A549 (cell line): ENCODE measurements at regions of chr4 and their contacts with region 1.

Region 1: DNA sequence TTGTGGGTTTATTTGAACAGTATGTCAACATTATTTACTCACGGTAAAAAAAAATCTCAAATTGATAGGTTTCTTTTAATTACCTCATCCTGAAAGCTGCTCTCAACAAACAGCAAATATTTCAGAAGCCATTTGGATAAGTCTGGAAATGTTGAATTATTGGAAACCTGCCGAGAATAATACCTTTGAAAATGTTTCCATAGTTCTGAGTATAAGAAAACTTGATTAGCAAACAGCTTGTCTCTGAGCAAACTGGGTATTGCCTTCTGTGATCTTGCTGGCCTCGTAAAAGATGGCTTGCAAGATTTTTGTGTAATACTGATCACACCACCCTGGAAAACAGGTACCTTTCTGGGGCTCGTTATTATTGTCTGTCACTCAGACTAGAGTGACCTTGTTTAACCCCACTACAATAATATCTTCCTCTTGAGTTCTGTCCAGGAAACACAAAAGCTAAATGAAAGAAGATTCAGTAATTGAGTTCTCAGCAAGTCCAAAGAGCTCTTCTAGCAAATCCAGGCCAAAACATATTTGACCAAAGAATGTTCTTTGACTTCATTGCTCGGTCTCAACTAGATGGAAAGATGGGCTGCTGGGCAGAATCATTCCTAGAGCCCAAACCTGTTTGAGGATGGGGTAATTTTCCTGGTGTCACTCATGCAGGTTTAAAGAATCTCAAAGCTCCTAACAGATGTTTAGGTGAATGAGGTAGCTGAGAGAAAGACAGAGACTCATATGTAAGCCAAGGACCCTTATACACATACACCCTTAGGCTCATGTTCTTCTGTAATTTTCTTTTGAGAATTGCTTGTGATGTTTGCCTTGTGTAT is 255.6 kb upstream of the JADE1 start:
- DNase-seq: peak in 1 of 2 experiments; percentile 74
- ATAC-seq: peak; percentile 34 to 44; a peak in 5 of 6 replicates
- H3K4me3 ChIP-seq: peak overlapping the region; percentile 28; the same call in 2 of the 3 replicates
- H3K27ac ChIP-seq: peak overlapping the region; percentile 99 to 100
- H3K4me1 ChIP-seq: peaks cover 53% of the 10 kb centered on the region
- CTCF ChIP-seq: no peak
- EP300 ChIP-seq: peak in 1 of 2 experiments; percentile 79; a peak in 2 of 5 replicates
- POLR2A ChIP-seq: no peak
- RAD21 ChIP-seq: no peak; a peak in 2 of 5 replicates

Region 2: DNA sequence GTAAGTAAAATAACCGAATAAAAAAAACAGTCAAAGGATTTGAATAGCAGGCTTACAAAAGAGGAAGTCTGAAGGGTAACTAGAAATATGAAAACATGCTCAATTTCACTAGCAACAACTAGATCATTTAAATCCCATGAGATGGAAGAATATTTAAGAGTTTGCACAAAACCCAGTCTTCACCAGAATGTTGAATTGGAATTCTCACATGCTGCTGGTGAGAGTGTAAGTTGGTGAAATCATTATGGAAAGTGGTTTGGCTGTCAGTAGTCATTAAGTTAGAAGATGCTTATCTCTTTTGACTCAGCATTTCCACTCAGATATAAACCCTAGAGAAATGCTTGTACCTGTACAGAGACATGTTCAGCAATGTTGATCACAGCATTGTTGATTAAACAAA is 376.4 kb before region 1 on chr4:
- CTCF ChIA-PET with region 1: no interaction called
- POLR2A ChIA-PET with region 1: no interaction called
- DNase-seq: no peak
- ATAC-seq: no peak
- H3K4me3 ChIP-seq: no peak overlapping the region
- H3K27ac ChIP-seq: no peak overlapping the region
- H3K4me1 ChIP-seq: no peaks in the 10 kb centered on the region
- CTCF ChIP-seq: no peak
- EP300 ChIP-seq: no peak
- POLR2A ChIP-seq: no peak
- RAD21 ChIP-seq: no peak

Region 3: GRCh38 chr4:128517739-128518510 is 36.0 kb before region 1 on chr4:
- CTCF ChIA-PET with region 1: interaction called, 10 read pairs
- POLR2A ChIA-PET with region 1: interaction called, 18 read pairs
- DNase-seq: peak; percentile 81 to 93
- ATAC-seq: peak; percentile 97
- H3K4me3 ChIP-seq: no peak overlapping the region
- H3K27ac ChIP-seq: peak overlapping the region; percentile 95 to 99
- H3K4me1 ChIP-seq: peaks cover 66% of the 10 kb centered on the region
- CTCF ChIP-seq: no peak
- EP300 ChIP-seq: peak; percentile 79 to 81; a peak in 4 of 5 replicates
- POLR2A ChIP-seq: no peak
- RAD21 ChIP-seq: peak; percentile 9 to 42; a peak in 2 of 5 replicates

Region 4: GRCh38 chr4:128528793-128529553 is 24.9 kb before region 1 on chr4:
- CTCF ChIA-PET with region 1: no interaction called
- POLR2A ChIA-PET with region 1: interaction called, 28 read pairs
- DNase-seq: peak; percentile 78 to 95
- ATAC-seq: peak; percentile 97 to 99
- H3K4me3 ChIP-seq: no peak overlapping the region
- H3K27ac ChIP-seq: peak overlapping the region; percentile 95 to 99
- H3K4me1 ChIP-seq: peaks cover 59% of the 10 kb centered on the region
- CTCF ChIP-seq: no peak
- EP300 ChIP-seq: peak; percentile 86 to 92; a peak in 4 of 5 replicates
- POLR2A ChIP-seq: no peak
- RAD21 ChIP-seq: peak; percentile 30 to 42; a peak in 3 of 5 replicates

Region 5: DNA sequence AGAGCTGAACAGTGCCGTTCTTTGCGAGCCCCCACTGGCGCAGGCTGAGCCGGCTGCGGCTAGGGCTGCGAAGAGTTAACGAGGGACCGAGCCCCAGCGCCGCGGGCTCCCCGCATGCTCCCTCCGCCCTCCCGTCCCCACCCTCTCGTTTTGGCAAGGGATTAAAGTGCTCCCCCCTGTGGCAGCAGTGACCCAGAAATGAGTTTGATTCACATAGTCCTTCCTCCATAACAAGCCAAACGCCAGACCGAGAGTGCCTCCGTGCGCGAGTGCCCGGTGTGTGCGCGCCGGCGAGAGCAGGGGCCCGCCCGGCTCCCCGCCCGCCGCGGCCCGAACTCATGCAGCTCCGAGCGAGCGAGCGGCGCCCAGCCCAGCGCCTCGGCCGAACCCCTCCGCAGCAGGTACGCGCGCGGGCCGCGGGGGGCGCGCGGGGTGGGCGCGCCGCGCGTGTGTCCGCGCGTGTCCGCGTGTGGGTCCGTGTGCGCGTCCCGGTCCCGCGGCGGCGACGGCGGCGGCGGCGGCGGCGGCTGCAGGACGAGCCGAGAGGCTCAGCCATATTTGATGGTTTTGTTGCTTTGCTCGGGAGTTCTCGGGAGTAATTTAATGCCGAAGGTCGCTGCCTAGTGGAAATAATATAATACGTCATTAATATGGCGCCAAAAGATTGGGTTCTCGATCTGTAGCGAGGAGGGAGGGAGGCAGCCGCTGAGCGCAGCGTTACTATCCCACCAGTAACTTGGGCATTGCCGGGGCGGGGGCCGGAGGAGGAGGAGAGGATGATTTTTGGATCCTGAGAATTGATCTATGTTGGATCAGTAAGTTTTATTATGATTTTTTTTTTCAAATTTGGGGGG is 255.8 kb after region 1 on chr4 and contains the start of gene JADE1:
- CTCF ChIA-PET with region 1: no interaction called
- POLR2A ChIA-PET with region 1: interaction called, 28 read pairs
- DNase-seq: peak; percentile 79 to 94
- ATAC-seq: peak; percentile 71 to 76
- H3K4me3 ChIP-seq: peak within 1 kb of the TSS; percentile 85
- H3K27ac ChIP-seq: peak within 1 kb of the TSS; percentile 96 to 100
- H3K4me1 ChIP-seq: peaks cover 19% of the 10 kb centered on the region
- CTCF ChIP-seq: peak; percentile 71
- EP300 ChIP-seq: peak; percentile 26 to 41; a peak in 2 of 5 replicates
- POLR2A ChIP-seq: peak; percentile 31
- RAD21 ChIP-seq: peak; percentile 85 to 95
- polyA plus RNA-seq, gene JADE1: 46.7 and 54.6 TPM in 2 replicates